ENCODE measurements at regions of chr6 and their contacts with region 1.

Region 1: DNA sequence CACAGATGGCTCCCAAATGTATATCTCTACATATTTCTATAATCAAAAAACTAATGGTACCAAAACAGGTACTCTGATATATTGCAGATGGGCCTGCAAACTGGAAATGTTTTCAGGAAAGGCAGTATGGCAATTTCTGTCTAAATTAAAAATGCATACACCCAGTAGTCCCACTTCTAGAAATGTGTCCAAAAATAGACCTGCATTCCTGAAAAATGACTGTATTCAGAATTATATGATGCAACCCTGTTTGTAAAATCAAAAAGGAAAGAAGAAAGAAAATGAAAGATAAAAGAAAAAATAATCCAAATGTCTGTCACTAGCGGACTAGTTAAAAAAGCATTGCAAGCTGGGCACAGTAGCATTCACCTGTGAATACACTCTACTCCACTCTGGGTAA is 12.9 kb upstream of the MICB start:
- DNase-seq: no peak
- ATAC-seq: no peak
- H3K4me3 ChIP-seq: no peak overlapping the region
- H3K27ac ChIP-seq: no peak overlapping the region
- H3K4me1 ChIP-seq: peaks cover 22% of the 10 kb centered on the region
- H3K27me3 ChIP-seq: peaks cover 5 to 19% of the 10 kb centered on the region in 2 experiments; a peak in 3 of 5 replicates
- CTCF ChIP-seq: no peak
- EP300 ChIP-seq: no peak
- POLR2A ChIP-seq: no peak
- RAD21 ChIP-seq: no peak

Region 2: DNA sequence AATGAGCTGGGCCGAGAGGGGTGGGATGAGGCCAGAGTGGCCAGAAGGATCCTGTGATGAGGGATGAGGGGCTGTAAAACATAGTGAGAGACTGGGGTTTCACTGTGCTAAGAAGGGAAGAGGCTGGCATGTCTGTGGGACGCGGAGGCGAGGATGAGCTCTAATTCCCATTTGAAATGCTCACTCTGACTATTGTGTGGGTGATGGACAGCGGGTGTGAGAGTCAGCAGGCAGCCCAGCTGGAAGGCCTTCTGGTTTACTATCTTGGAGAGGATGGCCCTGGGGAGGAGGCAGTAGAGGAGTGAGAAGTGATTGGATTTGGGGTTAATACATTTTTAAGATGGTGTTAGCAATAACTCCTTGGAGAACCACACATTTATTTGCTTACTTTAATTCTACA is 91.1 kb before region 1 on chr6:
- CTCF ChIA-PET with region 1: no interaction called
- POLR2A ChIA-PET with region 1: no interaction called
- in situ Hi-C with region 1: no loop called
- intact Hi-C with region 1: loop called (anchors 5 kb)
- DNase-seq: no peak
- ATAC-seq: no peak
- H3K4me3 ChIP-seq: no peak overlapping the region
- H3K27ac ChIP-seq: no peak overlapping the region
- H3K4me1 ChIP-seq: peaks cover 15% of the 10 kb centered on the region
- H3K27me3 ChIP-seq: no peaks in the 10 kb centered on the region
- CTCF ChIP-seq: no peak
- EP300 ChIP-seq: no peak
- POLR2A ChIP-seq: no peak
- RAD21 ChIP-seq: no peak

Measured in HepG2 (cell line).